ENCODE measurements at regions of chr6 and their contacts with region 1.

Region 1: DNA sequence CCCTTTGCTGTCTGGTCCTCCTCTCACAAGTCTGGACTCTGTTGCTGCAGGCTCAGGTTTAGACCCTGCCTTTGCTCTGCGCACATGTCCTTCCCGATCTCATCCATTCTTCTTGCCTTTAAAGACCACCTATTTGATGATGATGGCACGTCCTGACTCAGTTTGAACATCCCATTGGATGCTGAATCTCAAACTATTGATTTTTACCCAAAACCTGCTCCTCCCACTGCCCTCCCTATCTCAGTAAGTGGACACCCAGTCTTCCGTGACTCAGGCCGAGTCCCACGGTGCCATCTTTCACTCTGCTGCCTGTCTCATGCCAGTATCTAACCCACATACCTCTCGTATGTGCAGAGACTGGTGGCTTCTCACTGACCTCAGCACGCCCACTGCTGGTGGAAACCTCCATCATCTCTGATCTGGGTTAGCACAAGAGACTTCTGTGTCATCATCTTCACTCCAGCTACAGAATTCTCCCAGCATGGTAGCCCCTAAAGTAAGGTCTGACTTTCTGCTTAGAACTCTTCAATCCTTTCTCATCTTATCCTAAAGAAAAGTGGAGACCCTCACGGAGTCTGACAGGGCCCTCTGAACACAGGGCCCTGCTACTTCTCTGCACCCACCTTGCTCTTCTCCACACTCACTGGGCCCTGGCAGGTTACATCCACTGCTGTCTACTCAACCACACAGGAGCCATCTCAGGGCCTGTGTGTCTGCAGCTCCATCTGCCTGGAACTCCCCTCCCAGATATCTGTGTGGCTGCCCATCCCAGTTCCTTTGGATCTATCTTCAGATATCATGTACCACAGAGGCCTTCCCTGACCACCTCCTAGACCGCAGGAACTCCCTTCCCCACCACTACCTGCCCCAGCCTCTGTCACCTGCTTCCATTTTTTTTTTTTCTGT is 387.1 kb upstream of the AGPAT4 start:
- DNase-seq: no peak

Region 2: GRCh38 chr6:161613711-161614110 is 47.2 kb before region 1 on chr6:
- intact Hi-C with region 1: no loop called
- DNase-seq: no peak

Region 3: DNA sequence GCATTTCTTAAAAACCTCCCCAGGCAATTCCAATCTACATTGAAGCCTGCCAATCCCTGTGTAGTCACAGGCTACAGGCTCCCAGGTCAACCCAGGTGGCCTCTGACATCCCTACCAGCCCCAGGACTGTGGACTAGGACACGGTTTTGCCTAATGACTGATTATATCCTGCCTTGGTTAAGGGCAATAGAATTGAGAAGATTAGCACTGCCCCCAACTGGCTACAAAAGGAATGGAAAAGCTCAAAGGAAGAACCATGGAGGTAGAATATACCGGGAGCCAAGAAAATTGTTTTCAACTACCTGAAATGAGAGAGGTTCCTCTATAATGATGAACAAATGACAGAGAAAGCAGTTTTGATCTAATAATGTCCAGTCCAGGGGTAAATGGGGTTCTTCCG is 34.1 kb after region 1 on chr6:
- intact Hi-C with region 1: loop called in 1 of 2 experiments (anchors 1 kb)
- DNase-seq: no peak

Measured in posterior vena cava (tissue), 2 donors.